ENCODE measurements at regions of chr15 and their contacts with region 1.

Region 1: GRCh38 chr15:75023181-75023871 is at the start of gene PPCDC:
- DNase-seq: peak; percentile 97
- ATAC-seq: peak; percentile 100
- H3K4me3 Mint-ChIP-seq: peak within 1 kb of the TSS; percentile 89
- H3K27ac Mint-ChIP-seq: peak within 1 kb of the TSS; percentile 95
- H3K4me1 Mint-ChIP-seq: peaks cover 13% of the 10 kb centered on the region
- H3K27me3 Mint-ChIP-seq: no peaks in the 10 kb centered on the region
- total RNA-seq, gene PPCDC: 23.3 to 24.0 TPM

Region 2: GRCh38 chr15:74889883-74890664 is 133.3 kb before region 1 on chr15 and contains the start of gene MPI:
- CTCF ChIA-PET with region 1: interaction called, 3 read pairs
- POLR2A ChIA-PET with region 1: no interaction called
- intact Hi-C with region 1: loop called in 1 of 2 experiments (anchors 1 kb)
- DNase-seq: peak; percentile 95
- ATAC-seq: peak; percentile 98
- H3K4me3 Mint-ChIP-seq: peak within 1 kb of the TSS; percentile 73
- H3K27ac Mint-ChIP-seq: peak within 1 kb of the TSS; percentile 86
- H3K4me1 Mint-ChIP-seq: peaks cover 46% of the 10 kb centered on the region
- H3K27me3 Mint-ChIP-seq: no peaks in the 10 kb centered on the region
- total RNA-seq, gene MPI: 75.7 to 93.3 TPM

Region 3: GRCh38 chr15:74964794-74965193 is 58.5 kb before region 1 on chr15:
- CTCF ChIA-PET with region 1: no interaction called
- POLR2A ChIA-PET with region 1: interaction called, 6 read pairs
- intact Hi-C with region 1: loop called in 1 of 2 experiments (anchors 2 kb)
- DNase-seq: no peak
- ATAC-seq: no peak
- H3K4me3 Mint-ChIP-seq: no peak overlapping the region
- H3K27ac Mint-ChIP-seq: no peak overlapping the region
- H3K4me1 Mint-ChIP-seq: peaks cover 16% of the 10 kb centered on the region
- H3K27me3 Mint-ChIP-seq: peaks cover 2% of the 10 kb centered on the region

Region 4: DNA sequence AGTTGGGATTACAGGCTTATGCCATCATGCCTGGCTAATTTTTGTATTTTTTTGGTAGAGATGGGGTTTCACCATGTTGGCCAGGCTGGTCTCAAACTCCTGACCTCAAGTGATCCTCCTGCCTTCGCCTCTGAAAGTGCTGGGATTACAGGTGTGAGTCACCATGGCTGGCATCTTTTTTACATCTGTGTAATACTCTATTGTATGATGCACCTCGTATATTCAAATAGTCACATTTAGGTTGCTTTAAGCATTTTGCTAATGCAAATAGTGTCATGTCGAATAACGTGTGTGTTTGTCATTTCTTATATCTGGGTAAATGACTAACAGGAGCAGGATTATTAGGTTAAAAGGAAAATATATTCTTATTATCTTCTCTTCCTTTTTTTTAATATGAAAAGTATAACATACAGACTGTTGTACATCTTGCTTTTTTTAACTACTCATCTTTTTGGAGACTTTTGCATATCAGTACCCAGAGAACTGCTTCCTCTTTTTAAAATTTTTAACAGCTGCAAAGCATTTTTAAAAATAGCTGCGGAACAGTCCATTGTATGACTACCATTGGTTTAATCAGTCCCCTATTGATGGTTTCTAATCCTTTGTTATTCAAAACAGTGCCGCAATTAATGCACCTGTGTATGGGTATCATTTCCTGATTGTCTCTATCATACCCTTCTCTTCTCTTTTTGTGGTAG is 14.5 kb before region 1 on chr15:
- CTCF ChIA-PET with region 1: no interaction called
- POLR2A ChIA-PET with region 1: no interaction called
- intact Hi-C with region 1: no loop called
- DNase-seq: no peak
- ATAC-seq: no peak
- H3K4me3 Mint-ChIP-seq: no peak overlapping the region
- H3K27ac Mint-ChIP-seq: no peak overlapping the region
- H3K4me1 Mint-ChIP-seq: peaks cover 10% of the 10 kb centered on the region
- H3K27me3 Mint-ChIP-seq: no peaks in the 10 kb centered on the region

Region 5: GRCh38 chr15:75335705-75336355 is 312.5 kb after region 1 on chr15 and contains the start of gene COMMD4:
- CTCF ChIA-PET with region 1: no interaction called
- POLR2A ChIA-PET with region 1: no interaction called
- intact Hi-C with region 1: loop called in 1 of 2 experiments (anchors 1 kb)
- DNase-seq: peak; percentile 95
- ATAC-seq: peak; percentile 88
- H3K4me3 Mint-ChIP-seq: peak within 1 kb of the TSS; percentile 94
- H3K27ac Mint-ChIP-seq: peak within 1 kb of the TSS; percentile 88
- H3K4me1 Mint-ChIP-seq: peaks cover 12% of the 10 kb centered on the region
- H3K27me3 Mint-ChIP-seq: no peaks in the 10 kb centered on the region
- total RNA-seq, gene COMMD4: 47.1 to 67.8 TPM

Region 6: GRCh38 chr15:75684642-75685041 is 661.3 kb after region 1 on chr15:
- CTCF ChIA-PET with region 1: no interaction called
- POLR2A ChIA-PET with region 1: no interaction called
- intact Hi-C with region 1: loop called in 1 of 2 experiments (anchors 10 kb)
- DNase-seq: no peak
- ATAC-seq: no peak
- H3K4me3 Mint-ChIP-seq: no peak overlapping the region
- H3K27ac Mint-ChIP-seq: no peak overlapping the region
- H3K4me1 Mint-ChIP-seq: no peaks in the 10 kb centered on the region
- H3K27me3 Mint-ChIP-seq: peaks cover 2% of the 10 kb centered on the region